ENCODE measurements at regions of chr12 and their contacts with region 1.

Region 1: GRCh38 chr12:65306366-65307168 is 28.1 kb downstream of the MSRB3 start:
- DNase-seq: peak; percentile 86

Region 2: GRCh38 chr12:65074932-65075331 is 231.6 kb before region 1 on chr12:
- intact Hi-C with region 1: no loop called
- DNase-seq: no peak

Region 3: GRCh38 chr12:65163755-65164154 is 142.8 kb before region 1 on chr12:
- intact Hi-C with region 1: no loop called
- DNase-seq: no peak

Region 4: DNA sequence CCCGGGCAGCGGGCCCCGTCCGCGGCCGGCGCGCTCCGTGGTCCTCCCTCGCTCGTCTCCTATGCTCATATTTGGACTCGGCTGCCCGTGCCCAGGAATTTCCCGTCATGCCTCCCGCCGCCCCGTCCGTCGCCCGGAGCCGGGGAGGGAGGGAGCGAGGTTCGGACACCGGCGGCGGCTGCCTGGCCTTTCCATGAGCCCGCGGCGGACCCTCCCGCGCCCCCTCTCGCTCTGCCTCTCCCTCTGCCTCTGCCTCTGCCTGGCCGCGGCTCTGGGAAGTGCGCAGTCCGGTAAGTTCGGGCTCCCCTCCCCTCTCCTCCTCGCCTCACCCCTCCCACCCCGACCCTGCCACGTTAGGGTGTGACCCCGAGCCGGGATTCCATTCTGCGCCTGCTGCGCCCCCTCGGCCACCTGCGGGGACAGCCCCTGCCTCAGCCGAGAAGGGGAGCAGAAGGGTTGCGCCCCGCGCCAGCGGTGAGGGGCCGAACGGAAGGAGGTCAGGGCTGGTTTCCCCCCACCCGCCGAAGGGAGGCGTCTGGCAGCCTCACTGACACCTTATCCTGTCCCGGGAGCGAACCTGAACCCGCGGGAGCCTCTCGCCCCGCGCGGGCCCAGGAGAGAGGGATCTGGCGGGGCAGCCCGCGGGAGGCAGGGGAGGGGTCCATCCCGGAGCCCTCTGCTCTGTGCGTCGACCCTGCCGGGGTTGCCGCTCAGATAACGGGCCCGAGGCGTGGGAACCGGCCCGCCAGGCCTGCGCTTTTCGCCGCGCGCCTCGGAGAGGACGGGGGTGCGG is 27.8 kb before region 1 on chr12 and contains the start of gene MSRB3:
- intact Hi-C with region 1: loop called (anchors 2 kb)
- DNase-seq: peak; percentile 91
- total RNA-seq, gene MSRB3: 166 TPM

Region 5: DNA sequence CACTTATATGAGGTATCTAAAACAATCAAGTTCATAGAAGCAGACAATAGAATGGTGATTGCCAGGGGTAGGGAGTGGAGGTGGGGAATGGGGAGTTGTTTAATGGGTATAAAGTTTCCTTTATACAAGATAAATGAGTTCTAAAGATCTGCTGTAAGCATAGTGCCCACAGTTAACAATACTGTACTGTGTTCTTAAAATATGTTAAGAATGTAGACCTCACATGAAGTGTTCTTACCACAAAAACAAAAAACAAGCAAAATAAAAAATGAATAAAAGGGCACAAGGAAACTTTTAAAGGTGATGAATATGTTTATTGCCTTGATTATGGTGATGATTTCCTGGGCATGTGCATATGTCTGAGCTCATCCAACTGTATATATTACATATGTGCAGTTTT is 183.7 kb after region 1 on chr12:
- intact Hi-C with region 1: no loop called
- DNase-seq: no peak

Region 6: DNA sequence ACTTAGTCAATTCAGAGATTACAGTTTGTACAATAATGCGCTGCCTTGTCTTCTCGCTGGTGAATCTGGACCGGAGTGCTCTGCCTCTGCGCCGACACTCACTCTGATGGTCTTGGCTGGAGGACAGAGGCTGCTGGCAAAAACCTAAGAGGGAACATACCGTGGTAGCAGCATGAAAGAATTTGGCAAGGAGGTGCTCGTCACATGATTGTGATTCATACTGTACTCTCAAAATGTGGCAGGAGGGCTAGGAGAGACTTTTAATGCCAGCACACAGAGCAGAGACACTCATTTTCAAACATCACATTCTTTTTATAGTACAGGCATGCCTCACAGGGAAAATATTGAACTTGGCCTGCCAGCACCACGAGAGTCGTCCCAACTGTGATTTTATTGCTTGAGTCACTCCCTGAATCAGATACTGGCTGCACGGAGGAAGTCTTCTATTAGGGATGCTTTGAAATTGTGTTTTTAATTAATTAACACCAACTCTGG is 585.5 kb after region 1 on chr12:
- intact Hi-C with region 1: loop called (anchors 10 kb)
- DNase-seq: peak; percentile 88

Measured in cardiac septum (tissue), 1 donor.